ENCODE measurements at regions of chr2 and their contacts with region 1.

Region 1: GRCh38 chr2:171410101-171410500 is 23.7 kb downstream of the METTL8 start:
- DNase-seq: no peak
- ATAC-seq: no peak
- H3K4me3 ChIP-seq: no peak overlapping the region
- H3K27ac ChIP-seq: no peak overlapping the region
- H3K4me1 ChIP-seq: no peaks in the 10 kb centered on the region
- H3K27me3 ChIP-seq: no peaks in the 10 kb centered on the region
- CTCF ChIP-seq: no peak

Region 2: GRCh38 chr2:170973492-170974303 is 436.4 kb before region 1 on chr2:
- intact Hi-C with region 1: loop called (anchors 5 kb)
- DNase-seq: peak; percentile 94
- ATAC-seq: peak; percentile 98
- H3K4me3 ChIP-seq: peak overlapping the region; percentile 81
- H3K27ac ChIP-seq: peak overlapping the region; percentile 81
- H3K4me1 ChIP-seq: peaks cover 9% of the 10 kb centered on the region
- H3K27me3 ChIP-seq: no peaks in the 10 kb centered on the region
- CTCF ChIP-seq: peak; percentile 90